ENCODE measurements at regions of chr15 and their contacts with region 1.

Region 1: GRCh38 chr15:92077353-92078085 is 224.0 kb downstream of the SLCO3A1 start:
- DNase-seq: peak; percentile 45 to 56
- ATAC-seq: peak; percentile 65 to 72
- H3K4me3 ChIP-seq: no peak overlapping the region
- H3K27ac ChIP-seq: no peak overlapping the region
- H3K4me1 ChIP-seq: peaks cover 7 to 9% of the 10 kb centered on the region in 2 donors
- H3K27me3 ChIP-seq: no peaks in the 10 kb centered on the region
- CTCF ChIP-seq: peak; percentile 45 to 68 (median 66)
- POLR2A ChIP-seq: no peak

Region 2: GRCh38 chr15:91302588-91303439 is 774.7 kb before region 1 on chr15:
- in situ Hi-C with region 1: loop called (anchors 5 to 10 kb)
- intact Hi-C with region 1: loop called (anchors 2 kb)
- DNase-seq: peak in 1 of 2 donors; percentile 20
- ATAC-seq: peak; percentile 80 to 81
- H3K4me3 ChIP-seq: no peak overlapping the region
- H3K27ac ChIP-seq: no peak overlapping the region
- H3K4me1 ChIP-seq: peaks cover 0 to 3% of the 10 kb centered on the region in 2 donors
- H3K27me3 ChIP-seq: peaks cover 2 to 15% (median 6%) of the 10 kb centered on the region in 3 donors
- CTCF ChIP-seq: peak; percentile 55 to 79 (median 68)
- POLR2A ChIP-seq: no peak

Region 3: DNA sequence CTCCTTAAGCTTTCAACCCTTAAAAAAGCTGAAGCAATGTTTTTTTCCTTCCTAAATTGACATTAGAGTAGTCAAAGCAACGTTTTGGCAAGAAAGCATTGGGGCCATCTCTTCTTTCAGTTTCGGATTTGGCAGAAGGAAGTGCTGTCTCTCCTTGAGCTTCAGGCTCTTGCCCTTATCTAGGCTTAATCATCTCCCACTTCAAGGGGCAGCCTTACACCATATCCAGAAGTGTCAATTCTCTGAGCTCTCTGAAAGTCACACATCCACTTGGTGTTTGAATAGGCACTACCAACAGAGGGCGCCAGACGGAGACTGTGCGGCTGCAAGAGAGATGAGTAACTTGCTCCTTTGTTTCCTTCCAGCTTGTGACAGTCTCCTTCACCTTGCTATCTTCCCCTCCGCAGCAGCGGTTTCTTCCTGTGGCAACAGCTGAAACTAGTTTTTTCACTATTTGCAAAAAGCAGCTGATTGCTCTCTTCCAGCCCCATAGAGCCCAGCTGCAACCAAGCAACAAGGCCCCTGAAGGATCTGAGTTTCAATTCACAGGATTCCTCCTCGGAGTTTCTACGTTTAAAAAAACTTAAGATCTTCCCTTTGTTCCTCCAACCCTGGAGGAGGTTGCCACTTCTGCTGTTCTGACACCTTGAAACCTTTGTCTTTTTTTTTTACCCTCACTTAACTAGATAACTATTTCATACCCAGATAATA is 371.0 kb before region 1 on chr15:
- in situ Hi-C with region 1: loop called (anchors 5 to 10 kb)
- intact Hi-C with region 1: loop called (anchors 5 kb)
- DNase-seq: peak; percentile 24 to 71
- ATAC-seq: peak; percentile 73 to 76
- H3K4me3 ChIP-seq: no peak overlapping the region
- H3K27ac ChIP-seq: no peak overlapping the region
- H3K4me1 ChIP-seq: peaks cover 0 to 4% of the 10 kb centered on the region in 2 donors
- H3K27me3 ChIP-seq: no peaks in the 10 kb centered on the region
- CTCF ChIP-seq: peak; percentile 60 to 82 (median 72)
- POLR2A ChIP-seq: no peak

Region 4: GRCh38 chr15:91782221-91782620 is 295.3 kb before region 1 on chr15:
- in situ Hi-C with region 1: no loop called
- intact Hi-C with region 1: no loop called
- DNase-seq: no peak
- ATAC-seq: no peak
- H3K4me3 ChIP-seq: no peak overlapping the region
- H3K27ac ChIP-seq: no peak overlapping the region
- H3K4me1 ChIP-seq: peaks cover 10 to 15% of the 10 kb centered on the region in 2 donors
- H3K27me3 ChIP-seq: no peaks in the 10 kb centered on the region
- CTCF ChIP-seq: no peak
- POLR2A ChIP-seq: no peak

Region 5: DNA sequence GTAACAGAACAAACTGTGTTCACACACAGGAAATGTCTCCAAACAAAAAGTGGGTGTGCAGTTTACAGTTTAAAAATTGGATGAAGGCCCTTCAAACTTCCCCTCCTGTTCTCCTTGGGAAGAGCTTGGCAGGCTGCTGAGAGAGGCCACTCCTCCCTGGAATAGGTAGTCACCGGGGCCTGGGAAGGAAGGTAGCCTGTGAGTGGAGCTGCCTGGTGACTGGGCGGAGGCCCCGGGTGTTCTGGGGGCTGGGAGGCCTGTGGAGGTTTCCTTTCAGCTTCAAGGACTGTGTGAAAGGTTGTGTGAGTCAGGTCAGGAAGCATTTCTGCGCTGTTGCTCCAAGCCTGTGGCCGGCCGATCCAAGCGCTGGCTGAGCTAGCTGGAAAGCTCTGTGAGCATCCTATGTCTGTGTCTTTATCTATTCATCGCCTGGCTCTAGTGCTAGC is 209.9 kb before region 1 on chr15:
- in situ Hi-C with region 1: loop called in 1 of 4 experiments (anchors 10 kb)
- intact Hi-C with region 1: no loop called
- DNase-seq: peak; percentile 34 to 56
- ATAC-seq: peak; percentile 65 to 74
- H3K4me3 ChIP-seq: no peak overlapping the region
- H3K27ac ChIP-seq: peak overlapping the region; percentile 64 to 74 (median 70)
- H3K4me1 ChIP-seq: peaks cover 52 to 58% of the 10 kb centered on the region in 2 donors
- H3K27me3 ChIP-seq: no peaks in the 10 kb centered on the region
- CTCF ChIP-seq: no peak
- POLR2A ChIP-seq: no peak

Region 6: GRCh38 chr15:91942676-91943576 is 134.6 kb before region 1 on chr15:
- in situ Hi-C with region 1: no loop called
- intact Hi-C with region 1: loop called (anchors 10 kb)
- DNase-seq: peak; percentile 78 to 84
- ATAC-seq: peak; percentile 94 to 95
- H3K4me3 ChIP-seq: peak overlapping the region in 2 of 4 donors; percentile 25 to 34
- H3K27ac ChIP-seq: peak overlapping the region; percentile 43 to 60 (median 56)
- H3K4me1 ChIP-seq: peaks cover 35 to 55% of the 10 kb centered on the region in 2 donors
- H3K27me3 ChIP-seq: no peaks in the 10 kb centered on the region
- CTCF ChIP-seq: no peak
- POLR2A ChIP-seq: no peak

Region 7: GRCh38 chr15:92112180-92112579 is 34.7 kb after region 1 on chr15:
- in situ Hi-C with region 1: no loop called
- intact Hi-C with region 1: no loop called
- DNase-seq: no peak
- ATAC-seq: no peak
- H3K4me3 ChIP-seq: no peak overlapping the region
- H3K27ac ChIP-seq: no peak overlapping the region
- H3K4me1 ChIP-seq: peaks cover 0 to 4% of the 10 kb centered on the region in 2 donors
- H3K27me3 ChIP-seq: no peaks in the 10 kb centered on the region
- CTCF ChIP-seq: no peak
- POLR2A ChIP-seq: no peak

Region 8: GRCh38 chr15:92413510-92413909 is 336.0 kb after region 1 on chr15:
- in situ Hi-C with region 1: no loop called
- intact Hi-C with region 1: no loop called
- DNase-seq: no peak
- ATAC-seq: no peak
- H3K4me3 ChIP-seq: no peak overlapping the region
- H3K27ac ChIP-seq: no peak overlapping the region
- H3K4me1 ChIP-seq: peaks cover 0 to 10% of the 10 kb centered on the region in 2 donors
- H3K27me3 ChIP-seq: no peaks in the 10 kb centered on the region
- CTCF ChIP-seq: no peak
- POLR2A ChIP-seq: no peak